Ascending aorta (tissue), 2 donors: ENCODE measurements at regions of chr17 and their contacts with region 1.

Region 1: DNA sequence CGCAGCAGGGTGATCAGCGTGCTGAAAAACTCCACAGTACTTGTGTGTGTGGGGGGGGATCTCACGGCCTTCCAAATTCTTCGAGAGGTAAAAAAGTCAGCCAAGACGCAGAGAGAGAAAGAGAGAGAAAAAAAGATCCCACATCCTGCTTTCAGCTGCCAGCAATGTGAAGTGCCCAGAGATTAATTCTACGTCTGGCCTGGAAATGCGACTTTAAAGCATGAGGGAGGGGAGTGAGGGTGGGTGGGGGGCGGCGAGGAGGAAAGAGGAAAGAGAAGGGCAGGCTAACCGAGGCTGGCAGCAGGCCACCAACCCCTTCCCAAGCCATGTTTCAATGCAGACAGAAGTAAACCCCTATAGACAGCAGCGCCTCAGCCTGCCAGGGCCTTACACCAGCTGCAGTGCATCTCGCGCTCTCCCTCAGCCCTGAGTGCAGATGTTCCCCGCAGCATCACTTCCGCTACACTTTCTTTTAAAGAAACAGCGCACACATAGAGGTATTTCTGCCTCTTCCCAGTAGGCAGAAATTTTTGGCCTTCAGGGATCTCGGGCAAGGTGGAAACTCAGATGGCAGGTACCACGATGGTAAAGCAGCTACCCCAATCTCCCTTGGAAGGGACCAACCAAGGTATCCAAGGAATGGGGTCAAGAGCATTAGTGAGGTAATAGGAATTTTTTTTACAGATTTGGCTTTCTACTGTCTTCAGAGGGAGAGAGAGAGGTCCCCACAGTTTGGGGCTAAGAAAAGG is 87.8 kb downstream of the SMG6 start:
- DNase-seq: peak in 1 of 2 donors; percentile 82
- H3K4me3 ChIP-seq: peak overlapping the region; percentile 42 to 51
- H3K27ac ChIP-seq: peak overlapping the region; percentile 88 to 94
- H3K4me1 ChIP-seq: peaks cover 18 to 50% of the 10 kb centered on the region in 2 donors
- H3K27me3 ChIP-seq: no peaks in the 10 kb centered on the region
- CTCF ChIP-seq: no peak

Region 2: GRCh38 chr17:2172077-2172851 is 43.5 kb before region 1 on chr17:
- intact Hi-C with region 1: loop called (anchors 1 kb)
- DNase-seq: peak; percentile 36 to 83
- H3K4me3 ChIP-seq: peak overlapping the region; percentile 26 to 40
- H3K27ac ChIP-seq: peak overlapping the region; percentile 82 to 84
- H3K4me1 ChIP-seq: peaks cover 23 to 52% of the 10 kb centered on the region in 2 donors
- H3K27me3 ChIP-seq: no peaks in the 10 kb centered on the region
- CTCF ChIP-seq: no peak

Region 3: DNA sequence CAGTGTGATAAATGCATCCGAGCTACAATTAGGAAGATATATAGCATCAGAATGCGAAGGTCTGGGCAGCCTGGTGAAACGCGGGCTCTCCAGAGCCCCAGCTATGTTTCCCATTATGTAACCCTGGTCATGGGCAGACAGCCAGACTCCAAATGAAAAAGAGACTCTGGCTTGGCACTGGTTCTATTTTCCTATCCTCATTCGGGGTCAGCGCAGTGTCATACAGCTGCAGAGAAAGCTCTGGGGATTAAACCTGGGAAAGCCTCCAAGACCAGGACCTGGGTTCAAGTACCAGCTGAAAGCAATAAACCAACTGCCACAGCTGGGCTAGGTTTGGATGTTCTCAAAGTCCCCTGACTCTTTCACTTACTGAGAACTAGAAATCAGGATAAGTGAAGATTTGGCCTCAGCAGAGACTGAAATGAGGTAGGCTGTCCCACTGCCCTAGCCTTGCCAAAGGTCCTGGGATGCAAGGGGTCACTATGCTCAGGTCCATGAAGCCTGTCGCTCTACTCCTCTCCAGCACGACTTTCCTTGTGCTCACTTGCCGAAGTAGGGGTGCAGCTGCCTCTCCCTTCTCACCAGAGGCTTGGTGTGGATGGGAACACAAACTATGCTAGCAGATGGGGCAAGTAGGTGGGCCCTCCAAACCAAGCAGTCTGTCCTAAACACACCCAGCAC is 36.0 kb before region 1 on chr17:
- intact Hi-C with region 1: loop called (anchors 2 kb)
- DNase-seq: peak in 1 of 2 donors; percentile 85
- H3K4me3 ChIP-seq: peak overlapping the region in 1 of 2 donors; percentile 15
- H3K27ac ChIP-seq: peak overlapping the region; percentile 84 to 89
- H3K4me1 ChIP-seq: peaks cover 39 to 74% of the 10 kb centered on the region in 2 donors
- H3K27me3 ChIP-seq: no peaks in the 10 kb centered on the region
- CTCF ChIP-seq: no peak

Region 4: GRCh38 chr17:2237521-2237921 is 21.7 kb after region 1 on chr17:
- intact Hi-C with region 1: loop called (anchors 2 kb)
- DNase-seq: peak in 1 of 2 donors; percentile 73
- H3K4me3 ChIP-seq: no peak overlapping the region
- H3K27ac ChIP-seq: peak overlapping the region; percentile 52 to 73
- H3K4me1 ChIP-seq: peaks cover 10 to 52% of the 10 kb centered on the region in 2 donors
- H3K27me3 ChIP-seq: no peaks in the 10 kb centered on the region
- CTCF ChIP-seq: no peak